Activated T-helper 1 cell treated with anti-CD3 and anti-CD28 coated beads, Interleukin-12 subunit alpha, Interleukin-12 subunit beta, Interleukin-2, Interleukin-4 antibody, amounts not matched to agents 30 ng/mL and 10 ng/mL and 1 ng/mL, durations not matched to agents 14 hours and 24 hours and 36 hours (primary cell): ENCODE measurements at regions of chr11 and their contacts with region 1.

Region 1: DNA sequence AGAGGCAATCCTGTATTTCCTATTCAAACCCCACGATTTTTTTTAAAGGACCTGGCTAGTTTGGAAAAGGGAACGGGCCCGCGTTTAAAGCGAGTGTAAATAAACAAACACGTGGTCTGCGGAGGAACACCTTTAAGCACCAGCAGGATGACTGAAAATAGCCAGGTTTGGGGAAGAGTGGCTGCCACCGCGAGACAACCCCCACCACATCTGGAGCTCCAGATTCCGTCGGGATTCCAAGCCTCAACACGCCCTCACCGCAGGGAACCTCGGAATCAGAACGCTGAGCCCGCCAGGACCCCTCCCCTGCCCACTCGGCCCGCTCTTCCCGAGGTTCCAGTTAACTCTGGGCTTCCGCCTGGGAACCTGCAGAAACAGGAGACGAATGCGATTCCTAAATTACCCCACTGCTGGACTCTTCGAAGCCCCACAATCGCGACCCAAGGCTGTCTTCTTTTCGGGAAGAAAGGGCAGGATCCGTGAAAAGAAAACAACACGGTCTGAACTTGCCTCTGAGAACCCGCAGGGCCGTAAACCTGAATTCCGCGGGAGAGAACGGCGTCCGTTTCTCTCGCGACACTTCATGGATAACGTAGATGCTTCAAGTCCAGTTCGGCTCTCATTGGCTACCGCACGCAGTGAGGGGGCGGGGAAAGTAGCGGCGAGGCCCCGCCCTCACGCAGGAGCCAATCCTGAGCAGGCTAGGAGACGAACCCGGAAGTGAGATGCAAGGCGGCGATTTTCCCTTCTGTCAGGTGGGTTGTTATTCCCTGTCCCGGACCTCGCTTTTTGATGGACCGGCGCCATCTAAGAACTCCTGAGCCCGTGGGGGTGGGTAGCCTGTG is at the starts of genes ANKRD49 and MRE11:
- DNase-seq: peak; percentile 96
- H3K4me3 Mint-ChIP-seq: peak within 1 kb of the TSS; percentile 94
- H3K27ac Mint-ChIP-seq: peak within 1 kb of the TSS; percentile 92
- H3K4me1 Mint-ChIP-seq: peaks cover 36% of the 10 kb centered on the region
- H3K27me3 Mint-ChIP-seq: no peaks in the 10 kb centered on the region
- total RNA-seq, gene ANKRD49: 20.0 and 21.2 TPM in 2 replicates
- total RNA-seq, gene MRE11: 43.8 and 45.9 TPM in 2 replicates

Region 2: DNA sequence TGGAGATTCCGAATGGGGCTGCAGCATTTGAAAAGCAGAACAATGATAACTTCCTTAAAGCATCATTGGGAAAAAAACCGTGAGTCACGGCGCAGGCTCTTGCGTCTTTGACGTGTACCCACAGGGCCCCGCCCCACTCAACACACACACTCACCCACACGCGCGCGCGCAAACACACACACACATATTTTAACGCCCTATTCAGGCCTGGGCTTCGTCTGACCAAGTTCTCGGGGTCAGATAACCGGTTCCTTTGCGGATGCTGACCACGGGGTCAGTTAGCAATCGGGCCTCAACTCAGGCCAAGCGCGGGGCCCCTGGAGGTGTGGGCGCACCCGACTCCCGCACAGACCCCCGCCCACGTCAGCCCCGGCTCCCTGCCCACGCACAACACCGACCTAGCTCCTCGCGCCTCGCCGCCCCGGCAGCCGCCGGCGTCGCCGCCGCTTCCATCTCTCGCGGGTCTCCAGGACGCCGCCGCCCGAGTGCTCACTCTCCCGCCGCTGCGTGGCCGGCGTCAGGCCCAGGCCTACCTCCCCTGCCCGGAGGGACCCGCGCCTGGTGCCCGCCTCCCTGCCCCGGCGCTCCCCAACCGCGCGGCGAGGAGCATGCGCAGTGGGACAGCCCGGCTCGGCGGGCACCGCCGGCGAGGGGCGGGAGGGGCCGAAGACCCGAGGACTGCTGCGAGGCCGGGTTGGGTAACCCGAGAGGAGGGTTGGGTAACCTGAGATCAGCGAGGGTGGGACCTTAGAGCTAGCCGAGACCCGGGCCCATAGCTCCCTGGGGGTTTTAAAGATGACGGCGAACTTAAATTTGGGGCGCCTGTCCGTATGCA is 1295.9 kb before region 1 on chr11 and contains the start of gene SLC36A4:
- intact Hi-C with region 1: loop called (anchors 5 kb)
- DNase-seq: peak; percentile 80
- H3K4me3 Mint-ChIP-seq: peak within 1 kb of the TSS; percentile 97
- H3K27ac Mint-ChIP-seq: peak within 1 kb of the TSS; percentile 97
- H3K4me1 Mint-ChIP-seq: peaks cover 13% of the 10 kb centered on the region
- H3K27me3 Mint-ChIP-seq: peaks cover 13% of the 10 kb centered on the region
- total RNA-seq, gene SLC36A4: 16.9 and 17.1 TPM in 2 replicates

Region 3: GRCh38 chr11:93741094-93741881 is 752.2 kb before region 1 on chr11 and contains the starts of genes C11orf54 and TAF1D:
- intact Hi-C with region 1: loop called (anchors 1 kb)
- DNase-seq: peak; percentile 96
- H3K4me3 Mint-ChIP-seq: peak within 1 kb of the TSS; percentile 100
- H3K27ac Mint-ChIP-seq: peak within 1 kb of the TSS; percentile 99
- H3K4me1 Mint-ChIP-seq: peaks cover 53% of the 10 kb centered on the region
- H3K27me3 Mint-ChIP-seq: no peaks in the 10 kb centered on the region
- total RNA-seq, gene C11orf54: 19.3 and 21.6 TPM in 2 replicates
- total RNA-seq, gene TAF1D: 337 and 345 TPM in 2 replicates

Region 4: DNA sequence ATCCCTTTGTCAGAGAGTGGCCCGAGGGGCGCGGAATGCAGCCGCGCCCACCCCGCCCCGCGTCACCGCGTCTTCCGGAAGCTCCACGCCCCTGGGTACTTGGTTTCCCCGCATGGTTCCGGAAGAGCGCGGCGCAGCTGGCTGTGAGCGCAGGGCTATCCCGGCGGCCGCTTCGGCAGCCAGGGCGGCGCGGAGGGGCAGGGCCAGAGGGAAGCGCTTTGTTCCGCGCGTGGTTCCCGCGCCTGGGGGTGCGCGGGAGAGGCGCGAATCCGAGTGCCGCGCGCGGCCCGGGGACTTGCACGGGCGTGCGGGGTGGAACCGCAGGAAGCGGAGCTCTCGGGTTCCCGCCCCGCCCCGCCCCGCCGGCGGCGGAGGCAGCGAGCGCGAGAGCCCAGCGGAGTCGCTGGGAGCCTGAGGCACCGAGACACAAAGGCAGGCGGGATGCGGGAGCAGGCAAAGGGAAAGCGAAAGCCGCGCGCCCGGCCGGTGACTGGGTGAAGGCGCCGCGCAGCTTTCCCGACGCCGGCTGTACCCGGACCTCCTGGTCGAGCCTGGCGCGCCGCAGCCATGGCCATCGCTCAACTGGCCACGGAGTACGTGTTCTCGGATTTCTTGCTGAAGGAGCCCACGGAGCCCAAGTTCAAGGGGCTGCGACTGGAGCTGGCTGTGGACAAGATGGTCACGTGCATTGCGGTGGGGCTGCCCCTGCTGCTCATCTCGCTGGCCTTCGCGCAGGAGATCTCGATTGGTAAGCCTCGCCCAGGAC is 364.6 kb before region 1 on chr11 and contains the start of gene PANX1:
- intact Hi-C with region 1: loop called (anchors 1 kb)
- DNase-seq: peak; percentile 73
- H3K4me3 Mint-ChIP-seq: no peak within 1 kb of the TSS
- H3K27ac Mint-ChIP-seq: peak within 1 kb of the TSS; percentile 88
- H3K4me1 Mint-ChIP-seq: peaks cover 20% of the 10 kb centered on the region
- H3K27me3 Mint-ChIP-seq: no peaks in the 10 kb centered on the region
- total RNA-seq, gene PANX1: 20.8 and 21.9 TPM in 2 replicates

Region 5: DNA sequence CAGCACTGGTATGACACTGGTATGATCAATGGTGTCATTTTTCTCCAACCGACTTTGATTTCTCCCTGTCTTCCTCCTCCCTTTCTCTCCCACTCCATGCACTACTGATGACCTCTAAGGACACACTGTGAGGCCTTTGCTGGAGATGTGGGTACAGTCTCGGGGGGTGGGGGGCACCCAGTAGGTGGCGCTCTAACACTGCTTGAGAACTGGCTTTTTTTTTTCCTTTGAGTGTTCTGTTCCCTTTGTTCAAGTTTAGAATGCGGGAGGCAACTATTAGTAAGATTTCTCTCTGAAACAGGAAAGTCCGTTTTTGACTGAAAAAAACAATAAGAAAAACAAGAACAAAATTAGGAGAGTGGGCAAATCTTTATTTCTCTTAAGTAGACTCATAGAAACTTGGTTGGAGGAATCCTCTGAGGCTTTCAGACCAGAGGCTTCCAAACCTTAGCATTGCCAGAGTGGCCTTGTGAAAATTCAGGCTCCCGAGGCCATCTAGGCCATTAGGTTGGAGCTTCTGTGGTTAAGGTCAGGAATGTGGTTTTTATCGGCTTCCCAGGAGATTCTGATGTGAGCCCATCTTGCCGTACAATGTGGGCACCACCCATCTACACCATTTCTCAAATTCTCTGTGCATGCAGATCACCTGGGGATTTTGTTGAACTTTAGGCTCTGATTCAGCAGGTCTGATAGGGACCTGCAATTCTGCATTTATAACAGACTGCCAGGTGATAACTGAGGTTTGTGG is 321.6 kb before region 1 on chr11:
- intact Hi-C with region 1: loop called (anchors 5 kb)
- DNase-seq: no peak
- H3K4me3 Mint-ChIP-seq: no peak overlapping the region
- H3K27ac Mint-ChIP-seq: no peak overlapping the region
- H3K4me1 Mint-ChIP-seq: peaks cover 16% of the 10 kb centered on the region
- H3K27me3 Mint-ChIP-seq: no peaks in the 10 kb centered on the region